ENCODE measurements at regions of chr11 and their contacts with region 1.

Region 1: GRCh38 chr11:15101072-15101709 is 13.5 kb upstream of the INSC start:
- DNase-seq: peak; percentile 57 to 65
- ATAC-seq: peak; percentile 93 to 98
- H3K4me3 ChIP-seq: no peak overlapping the region
- H3K27ac ChIP-seq: no peak overlapping the region
- H3K4me1 ChIP-seq: no peaks in the 10 kb centered on the region
- CTCF ChIP-seq: peak; percentile 88
- EP300 ChIP-seq: no peak
- POLR2A ChIP-seq: no peak
- RAD21 ChIP-seq: peak; percentile 80 to 81

Region 2: DNA sequence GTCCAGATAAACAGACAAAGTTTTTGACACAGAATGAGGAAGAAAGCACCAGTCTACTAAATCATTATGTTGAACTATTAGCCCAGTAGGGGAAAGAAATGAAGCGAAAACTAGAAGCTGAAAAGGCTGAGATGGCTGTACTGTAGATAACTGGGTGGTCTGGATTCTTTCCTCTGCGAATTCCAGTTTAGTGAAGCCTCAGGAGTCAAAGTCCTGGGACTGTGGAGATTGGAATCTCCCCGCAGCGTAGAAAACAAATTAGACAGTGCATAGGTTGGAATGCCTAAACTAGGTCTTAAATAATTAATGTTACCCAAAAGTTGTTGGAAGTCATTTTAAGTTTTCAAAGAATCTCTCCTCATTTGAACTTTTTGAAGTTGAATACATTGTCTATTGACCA is 34.6 kb before region 1 on chr11:
- CTCF ChIA-PET with region 1: no interaction called
- POLR2A ChIA-PET with region 1: no interaction called
- DNase-seq: no peak
- ATAC-seq: no peak
- H3K4me3 ChIP-seq: no peak overlapping the region
- H3K27ac ChIP-seq: no peak overlapping the region
- H3K4me1 ChIP-seq: no peaks in the 10 kb centered on the region
- CTCF ChIP-seq: no peak
- EP300 ChIP-seq: no peak
- POLR2A ChIP-seq: no peak
- RAD21 ChIP-seq: no peak

Region 3: GRCh38 chr11:15113381-15113780 is 12.2 kb after region 1 on chr11:
- CTCF ChIA-PET with region 1: interaction called, 21 read pairs
- POLR2A ChIA-PET with region 1: no interaction called
- DNase-seq: no peak
- ATAC-seq: no peak
- H3K4me3 ChIP-seq: no peak overlapping the region
- H3K27ac ChIP-seq: no peak overlapping the region
- H3K4me1 ChIP-seq: no peaks in the 10 kb centered on the region
- CTCF ChIP-seq: no peak
- EP300 ChIP-seq: no peak
- POLR2A ChIP-seq: no peak
- RAD21 ChIP-seq: no peak

Region 4: GRCh38 chr11:15208378-15209222 is 107.4 kb after region 1 on chr11:
- CTCF ChIA-PET with region 1: interaction called, 23 read pairs
- POLR2A ChIA-PET with region 1: interaction called, 4 read pairs
- DNase-seq: peak; percentile 56 to 80
- ATAC-seq: peak; percentile 92 to 100
- H3K4me3 ChIP-seq: no peak overlapping the region
- H3K27ac ChIP-seq: no peak overlapping the region
- H3K4me1 ChIP-seq: no peaks in the 10 kb centered on the region
- CTCF ChIP-seq: peak; percentile 83
- EP300 ChIP-seq: no peak
- POLR2A ChIP-seq: no peak
- RAD21 ChIP-seq: peak; percentile 92 to 96

Measured in A549 (cell line).